Prostate gland (tissue), 2 donors: ENCODE measurements at regions of chr10 and their contacts with region 1.

Region 1: GRCh38 chr10:31947144-31947926 is 18.7 kb upstream of the ARHGAP12 start:
- DNase-seq: peak; percentile 71
- H3K4me3 ChIP-seq: no peak overlapping the region
- H3K27ac ChIP-seq: peak overlapping the region; percentile 46 to 57
- H3K4me1 ChIP-seq: no peaks in the 10 kb centered on the region
- H3K27me3 ChIP-seq: no peaks in the 10 kb centered on the region
- CTCF ChIP-seq: peak; percentile 32 to 71 (median 58)
- POLR2A ChIP-seq: no peak

Region 2: GRCh38 chr10:31836569-31837406 is 110.5 kb before region 1 on chr10:
- intact Hi-C with region 1: loop called (anchors 10 kb)
- DNase-seq: no peak
- H3K4me3 ChIP-seq: no peak overlapping the region
- H3K27ac ChIP-seq: no peak overlapping the region
- H3K4me1 ChIP-seq: no peaks in the 10 kb centered on the region
- H3K27me3 ChIP-seq: no peaks in the 10 kb centered on the region
- CTCF ChIP-seq: peak in 3 of 4 experiments; percentile 30 to 47 (median 31)
- POLR2A ChIP-seq: no peak

Region 3: GRCh38 chr10:31864834-31865518 is 82.4 kb before region 1 on chr10:
- intact Hi-C with region 1: loop called (anchors 5 kb)
- DNase-seq: no peak
- H3K4me3 ChIP-seq: no peak overlapping the region
- H3K27ac ChIP-seq: peak overlapping the region; percentile 2 to 24
- H3K4me1 ChIP-seq: peaks cover 5% of the 10 kb centered on the region
- H3K27me3 ChIP-seq: no peaks in the 10 kb centered on the region
- CTCF ChIP-seq: no peak
- POLR2A ChIP-seq: no peak